ENCODE measurements at regions of chr12 and their contacts with region 1.

Region 1: DNA sequence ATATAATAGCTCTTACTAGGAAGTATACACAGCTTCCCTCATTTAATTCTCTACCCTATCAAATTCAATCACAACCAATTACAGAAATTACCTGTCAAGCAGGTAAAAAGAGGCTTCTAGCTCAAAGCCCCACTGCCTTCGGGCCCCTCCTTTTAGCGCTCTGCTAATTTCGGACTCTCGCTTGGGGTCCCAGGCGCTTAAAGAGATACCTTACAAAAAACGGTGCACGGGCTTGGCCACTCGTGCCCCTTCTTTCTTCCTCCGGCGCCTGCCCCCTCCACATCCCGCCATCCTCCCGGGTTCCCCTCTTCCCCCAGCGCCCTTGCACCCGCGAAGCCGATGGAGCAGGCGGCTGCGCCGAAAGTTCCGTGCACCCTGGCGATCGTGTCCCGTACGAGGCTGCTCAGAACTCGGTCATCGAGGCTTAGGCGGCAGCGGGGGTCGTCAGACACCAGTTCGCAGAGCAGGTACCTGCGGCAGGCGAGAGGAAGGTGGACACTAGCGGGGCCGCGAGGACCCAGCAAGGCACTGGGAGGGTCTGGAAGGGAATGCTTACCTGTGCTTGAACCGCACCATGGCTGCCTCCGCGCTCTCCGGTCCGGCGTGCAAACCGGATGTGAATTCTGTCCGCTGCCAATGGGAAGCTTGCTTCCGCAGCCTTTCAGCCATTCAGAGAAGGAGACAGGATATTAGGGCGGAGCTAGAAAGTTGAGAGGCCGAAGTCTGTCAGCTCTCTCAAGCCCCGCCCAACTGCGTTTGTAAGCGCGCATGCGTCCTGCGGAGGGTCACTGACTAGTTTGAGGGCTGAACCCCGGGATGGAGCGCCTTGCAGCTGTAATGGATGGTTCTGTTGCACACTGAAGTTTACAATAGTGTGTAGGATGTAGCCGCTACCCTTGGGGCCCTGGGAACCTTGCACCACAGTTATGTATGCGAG is at the start of gene POP5:
- DNase-seq: peak; percentile 97 to 98
- ATAC-seq: peak; percentile 93
- H3K4me3 ChIP-seq: peak within 1 kb of the TSS; percentile 52 to 72
- H3K27ac ChIP-seq: peak within 1 kb of the TSS in 1 of 2 donors; percentile 30
- H3K4me1 ChIP-seq: no peaks in the 10 kb centered on the region
- H3K27me3 ChIP-seq: no peaks in the 10 kb centered on the region
- total RNA-seq, gene POP5: 18.2 to 26.0 TPM

Region 2: GRCh38 chr12:120692524-120693033 is 111.5 kb after region 1 on chr12:
- intact Hi-C with region 1: no loop called
- DNase-seq: no peak
- ATAC-seq: no peak
- H3K4me3 ChIP-seq: no peak overlapping the region
- H3K27ac ChIP-seq: no peak overlapping the region
- H3K4me1 ChIP-seq: peaks cover 6% of the 10 kb centered on the region in 2 donors
- H3K27me3 ChIP-seq: no peaks in the 10 kb centered on the region

Region 3: GRCh38 chr12:120710031-120710804 is 129.2 kb after region 1 on chr12 and contains the start of gene UNC119B:
- intact Hi-C with region 1: loop called (anchors 2 to 5 kb)
- DNase-seq: peak; percentile 81 to 93
- ATAC-seq: peak; percentile 89
- H3K4me3 ChIP-seq: peak within 1 kb of the TSS; percentile 50 to 74
- H3K27ac ChIP-seq: peak within 1 kb of the TSS in 1 of 2 donors; percentile 18
- H3K4me1 ChIP-seq: no peaks in the 10 kb centered on the region
- H3K27me3 ChIP-seq: no peaks in the 10 kb centered on the region
- total RNA-seq, gene UNC119B: 18.6 to 24.4 TPM

Region 4: DNA sequence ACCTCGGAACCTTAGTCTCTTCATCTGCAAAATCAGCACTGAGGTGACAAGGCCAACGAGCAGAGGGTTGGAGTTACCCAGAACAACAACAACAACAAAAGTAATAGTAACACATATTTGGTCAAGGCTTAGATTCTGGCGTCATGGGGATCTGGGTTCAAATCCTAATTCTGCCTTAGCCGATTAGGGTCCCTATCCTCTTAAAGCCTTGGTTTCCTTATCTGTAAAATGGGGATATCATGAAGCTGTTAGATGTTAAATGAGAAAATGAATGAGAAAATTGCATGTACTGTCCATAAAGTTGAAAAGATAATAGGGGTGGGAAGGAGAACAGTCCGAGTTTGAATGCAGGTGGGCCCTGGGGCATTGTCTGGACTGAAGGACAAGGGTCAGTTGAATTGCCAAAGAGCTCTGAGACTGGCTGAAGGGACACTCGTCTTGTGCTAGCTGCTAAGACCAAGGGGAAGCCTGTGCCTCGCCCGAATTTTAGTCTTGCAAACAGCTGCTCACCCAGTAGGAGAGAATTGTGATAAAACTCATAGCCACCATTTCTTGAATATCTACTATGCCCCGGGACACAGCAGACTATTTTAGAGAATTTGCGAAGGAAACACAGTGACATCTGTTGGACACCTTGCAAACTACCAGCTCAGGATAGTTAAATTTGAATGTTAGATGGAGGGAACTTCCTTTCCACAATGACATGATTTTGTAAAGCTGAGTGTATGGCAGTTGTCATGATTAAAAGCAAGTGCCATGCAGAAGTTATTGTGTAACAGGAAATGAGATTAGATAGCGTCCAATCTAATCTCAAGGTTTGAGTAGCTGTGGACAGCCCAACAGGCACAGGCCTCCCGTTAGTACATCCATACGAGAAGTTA is 390.5 kb after region 1 on chr12:
- intact Hi-C with region 1: loop called in 1 of 2 experiments (anchors 2 kb)
- DNase-seq: no peak
- ATAC-seq: peak; percentile 74
- H3K4me3 ChIP-seq: no peak overlapping the region
- H3K27ac ChIP-seq: no peak overlapping the region
- H3K4me1 ChIP-seq: no peaks in the 10 kb centered on the region
- H3K27me3 ChIP-seq: no peaks in the 10 kb centered on the region

Region 5: GRCh38 chr12:121095544-121096198 is 514.6 kb after region 1 on chr12:
- intact Hi-C with region 1: loop called (anchors 5 kb)
- DNase-seq: peak; percentile 83 to 90
- ATAC-seq: peak; percentile 87
- H3K4me3 ChIP-seq: no peak overlapping the region
- H3K27ac ChIP-seq: no peak overlapping the region
- H3K4me1 ChIP-seq: no peaks in the 10 kb centered on the region
- H3K27me3 ChIP-seq: no peaks in the 10 kb centered on the region

Measured in aorta (tissue), 5 donors.